K562 (cell line): ENCODE measurements at regions of chr16 and their contacts with region 1.

Region 1: GRCh38 chr16:86563489-86564345 is 2.9 kb upstream of the FOXC2 start:
- DNase-seq: peak; percentile 86 to 90 (median 88)
- ATAC-seq: peak; percentile 97
- H3K4me3 ChIP-seq: no peak overlapping the region
- H3K27ac ChIP-seq: no peak overlapping the region
- H3K4me1 ChIP-seq: peaks cover 0 to 10% of the 10 kb centered on the region in 2 experiments; a peak in 1 of 5 replicates
- H3K27me3 ChIP-seq: peaks cover 26 to 46% of the 10 kb centered on the region in 2 experiments; a peak in 4 of 5 replicates
- CTCF ChIP-seq: peak; percentile 99 to 100 (median 100)
- EP300 ChIP-seq: no peak
- POLR2A ChIP-seq: no peak
- RAD21 ChIP-seq: peak; percentile 99 to 100

Region 2: DNA sequence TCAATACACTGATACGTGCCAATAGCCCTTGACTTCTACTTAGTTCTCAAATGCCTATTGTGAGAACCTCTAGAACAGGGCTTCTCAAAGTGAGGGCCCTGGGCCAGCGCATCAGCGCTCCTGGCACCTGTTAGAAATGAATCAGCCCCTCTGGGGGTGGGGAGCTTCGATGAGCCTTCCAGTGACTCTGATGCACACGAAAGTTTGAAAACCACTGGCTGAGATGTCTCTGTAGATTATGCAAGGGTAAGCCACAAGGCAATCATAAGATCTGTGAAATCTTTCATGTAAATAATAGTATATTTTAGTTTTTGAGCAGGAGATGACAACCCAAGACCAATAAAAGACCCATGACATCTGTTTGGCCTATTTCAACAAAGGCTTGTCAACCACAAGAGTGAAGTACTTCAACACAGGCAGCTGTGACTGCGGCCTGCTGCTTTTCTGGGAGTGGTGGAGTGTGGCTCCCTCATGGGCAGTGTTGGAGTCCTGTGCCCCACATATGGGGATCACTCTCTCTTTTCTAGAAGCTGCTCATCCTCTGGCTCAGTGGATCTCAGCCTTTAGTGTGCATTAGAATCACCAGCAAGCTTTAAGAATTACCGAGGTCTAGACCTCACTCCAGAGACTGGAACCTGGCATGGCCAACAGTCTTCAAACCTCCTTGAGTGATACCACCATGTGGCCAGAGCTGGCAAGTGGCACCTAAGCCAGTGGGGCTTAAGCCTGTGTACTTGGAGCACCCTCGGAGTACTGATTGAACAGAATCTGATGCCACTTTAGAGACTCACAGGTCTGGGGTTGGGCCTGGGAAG is 14.4 kb before region 1 on chr16:
- CTCF ChIA-PET with region 1: no interaction called
- POLR2A ChIA-PET with region 1: no interaction called
- in situ Hi-C with region 1: no loop called
- intact Hi-C with region 1: no loop called
- DNase-seq: no peak
- ATAC-seq: no peak
- H3K4me3 ChIP-seq: no peak overlapping the region
- H3K27ac ChIP-seq: no peak overlapping the region
- H3K4me1 ChIP-seq: peaks cover 0 to 7% of the 10 kb centered on the region in 2 experiments; a peak in 2 of 5 replicates
- H3K27me3 ChIP-seq: no peaks in the 10 kb centered on the region
- CTCF ChIP-seq: no peak
- EP300 ChIP-seq: no peak
- POLR2A ChIP-seq: no peak
- RAD21 ChIP-seq: no peak

Region 3: DNA sequence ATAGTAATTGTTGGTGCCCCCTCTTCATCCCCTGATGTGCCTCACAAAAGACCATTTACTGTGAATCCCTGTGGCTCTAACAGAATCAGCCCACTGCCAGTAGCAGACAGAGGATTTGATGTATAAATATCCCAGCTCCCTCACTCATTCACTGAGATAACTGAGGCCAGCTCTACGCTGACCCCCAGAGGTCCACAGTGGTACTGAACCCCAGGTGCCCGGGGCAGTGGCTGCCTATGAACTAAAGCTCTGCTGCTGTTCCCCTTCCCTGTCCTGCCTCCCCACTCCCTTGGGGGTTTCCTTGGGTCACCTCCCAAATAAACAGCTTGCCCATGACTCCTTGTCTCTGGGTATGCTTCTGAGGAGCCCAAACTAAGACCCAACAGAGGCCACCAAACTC is 310.4 kb after region 1 on chr16:
- CTCF ChIA-PET with region 1: interaction called, 8 read pairs
- POLR2A ChIA-PET with region 1: no interaction called
- in situ Hi-C with region 1: no loop called
- intact Hi-C with region 1: loop called (anchors 5 kb)
- DNase-seq: peak; percentile 39 to 73 (median 62)
- ATAC-seq: peak; percentile 88
- H3K4me3 ChIP-seq: no peak overlapping the region
- H3K27ac ChIP-seq: no peak overlapping the region
- H3K4me1 ChIP-seq: peaks cover 0 to 10% of the 10 kb centered on the region in 2 experiments; a peak in 2 of 5 replicates
- H3K27me3 ChIP-seq: peaks cover 25 to 54% of the 10 kb centered on the region in 2 experiments
- CTCF ChIP-seq: peak; percentile 68 to 73 (median 69)
- EP300 ChIP-seq: no peak
- POLR2A ChIP-seq: no peak
- RAD21 ChIP-seq: peak in 1 of 2 experiments; percentile 53; a peak in 2 of 4 replicates

Region 4: GRCh38 chr16:87062569-87063442 is 499.1 kb after region 1 on chr16:
- CTCF ChIA-PET with region 1: interaction called, 76 read pairs
- POLR2A ChIA-PET with region 1: no interaction called
- in situ Hi-C with region 1: loop called (anchors 5 kb)
- intact Hi-C with region 1: loop called (anchors 1 kb)
- DNase-seq: peak; percentile 81 to 96 (median 94)
- ATAC-seq: peak; percentile 96
- H3K4me3 ChIP-seq: no peak overlapping the region
- H3K27ac ChIP-seq: no peak overlapping the region
- H3K4me1 ChIP-seq: peaks cover 0 to 5% of the 10 kb centered on the region in 2 experiments; a peak in 1 of 5 replicates
- H3K27me3 ChIP-seq: peaks cover 37 to 41% of the 10 kb centered on the region in 2 experiments
- CTCF ChIP-seq: peak; percentile 85 to 86 (median 86)
- EP300 ChIP-seq: no peak
- POLR2A ChIP-seq: no peak
- RAD21 ChIP-seq: peak; percentile 66 to 81

Region 5: GRCh38 chr16:87076950-87077749 is 513.4 kb after region 1 on chr16:
- CTCF ChIA-PET with region 1: interaction called, 10 read pairs
- POLR2A ChIA-PET with region 1: no interaction called
- in situ Hi-C with region 1: no loop called
- intact Hi-C with region 1: no loop called
- DNase-seq: peak; percentile 53 to 73 (median 58)
- ATAC-seq: peak; percentile 92
- H3K4me3 ChIP-seq: no peak overlapping the region
- H3K27ac ChIP-seq: no peak overlapping the region
- H3K4me1 ChIP-seq: no peaks in the 10 kb centered on the region
- H3K27me3 ChIP-seq: peaks cover 7 to 23% of the 10 kb centered on the region in 2 experiments; a peak in 2 of 5 replicates
- CTCF ChIP-seq: peak; percentile 73 to 89 (median 75)
- EP300 ChIP-seq: no peak
- POLR2A ChIP-seq: no peak
- RAD21 ChIP-seq: peak in 1 of 2 experiments; percentile 62; a peak in 3 of 4 replicates

Region 6: GRCh38 chr16:87190288-87191230 is 626.8 kb after region 1 on chr16:
- CTCF ChIA-PET with region 1: no interaction called
- POLR2A ChIA-PET with region 1: no interaction called
- in situ Hi-C with region 1: no loop called
- intact Hi-C with region 1: loop called (anchors 10 kb)
- DNase-seq: peak in 1 of 4 experiments; percentile 22
- ATAC-seq: no peak
- H3K4me3 ChIP-seq: no peak overlapping the region
- H3K27ac ChIP-seq: no peak overlapping the region
- H3K4me1 ChIP-seq: no peaks in the 10 kb centered on the region
- H3K27me3 ChIP-seq: peaks cover 12 to 41% of the 10 kb centered on the region in 2 experiments; a peak in 3 of 5 replicates
- CTCF ChIP-seq: peak; percentile 33 to 43 (median 36); a peak in 3 of 6 replicates
- EP300 ChIP-seq: no peak
- POLR2A ChIP-seq: no peak
- RAD21 ChIP-seq: peak in 1 of 2 experiments; percentile 44; a peak in 1 of 4 replicates

Region 7: GRCh38 chr16:87278191-87279095 is 714.7 kb after region 1 on chr16:
- CTCF ChIA-PET with region 1: interaction called, 38 read pairs
- POLR2A ChIA-PET with region 1: no interaction called
- in situ Hi-C with region 1: loop called (anchors 10 kb)
- intact Hi-C with region 1: loop called (anchors 1 kb)
- DNase-seq: peak; percentile 71 to 82 (median 80)
- ATAC-seq: peak; percentile 100
- H3K4me3 ChIP-seq: no peak overlapping the region
- H3K27ac ChIP-seq: no peak overlapping the region
- H3K4me1 ChIP-seq: peaks cover 0 to 13% of the 10 kb centered on the region in 2 experiments; a peak in 2 of 5 replicates
- H3K27me3 ChIP-seq: no peaks in the 10 kb centered on the region
- CTCF ChIP-seq: peak; percentile 89 to 92 (median 90)
- EP300 ChIP-seq: no peak
- POLR2A ChIP-seq: no peak
- RAD21 ChIP-seq: peak; percentile 68 to 82